Activated CD8-positive, alpha-beta T cell treated with anti-CD3 and anti-CD28 coated beads, Interleukin-2, amount 10 ng/mL, durations not matched to agents 7 days and 5 days (primary cell): ENCODE measurements at regions of chr12 and their contacts with region 1.

Region 1: GRCh38 chr12:12696562-12697383 is 790 bp upstream of the GPR19 start:
- DNase-seq: peak; percentile 94
- ATAC-seq: peak; percentile 86
- H3K4me3 Mint-ChIP-seq: peak overlapping the region; percentile 91
- H3K27ac Mint-ChIP-seq: peak overlapping the region; percentile 98
- H3K4me1 Mint-ChIP-seq: peaks cover 43% of the 10 kb centered on the region
- H3K27me3 Mint-ChIP-seq: no peaks in the 10 kb centered on the region

Region 2: DNA sequence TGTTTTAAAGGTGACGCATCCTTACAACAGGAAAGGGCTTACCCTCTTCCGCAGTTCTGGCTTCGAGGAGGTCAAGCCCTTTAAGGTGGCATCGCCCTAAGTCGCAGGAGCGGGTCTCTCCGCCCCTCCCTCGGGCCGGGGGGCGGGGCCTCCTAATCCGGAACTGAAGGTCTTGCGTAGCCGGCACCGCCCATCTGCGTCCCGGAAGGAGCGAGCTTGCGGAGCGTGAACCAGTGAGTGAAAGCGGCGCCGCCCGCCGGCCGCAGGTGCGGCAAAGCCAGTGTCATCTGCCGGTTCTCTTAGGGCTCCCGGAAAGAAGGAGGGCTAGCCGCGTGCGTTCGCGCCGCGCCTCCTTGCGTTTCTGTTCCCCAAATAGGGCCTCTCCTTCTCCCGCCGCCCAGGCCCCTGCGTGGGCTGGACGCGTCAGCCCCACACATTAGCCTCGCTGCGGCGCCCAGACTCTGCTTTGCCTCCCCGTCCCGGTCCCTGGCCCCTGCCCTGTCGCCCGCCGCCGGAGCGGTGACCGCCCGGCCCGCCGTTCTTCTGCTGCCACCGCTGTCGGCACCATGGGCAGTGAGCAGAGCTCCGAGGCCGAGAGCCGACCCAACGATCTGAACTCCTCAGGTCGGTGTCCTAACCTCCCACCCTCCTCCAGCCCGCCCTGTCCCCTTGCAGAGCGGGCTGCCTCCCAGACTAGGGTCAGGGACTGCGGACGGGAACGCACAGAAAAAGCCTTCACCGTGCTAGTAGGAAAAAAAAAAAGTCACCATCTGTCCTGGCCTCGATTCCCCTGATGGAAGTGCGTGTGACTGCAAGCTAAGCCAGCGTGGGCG is 339.7 kb before region 1 on chr12 and contains the start of gene BORCS5:
- CTCF ChIA-PET with region 1: no interaction called
- POLR2A ChIA-PET with region 1: interaction called, 19 read pairs
- DNase-seq: peak; percentile 99
- ATAC-seq: peak; percentile 94
- H3K4me3 Mint-ChIP-seq: peak within 1 kb of the TSS; percentile 88
- H3K27ac Mint-ChIP-seq: peak within 1 kb of the TSS; percentile 94
- H3K4me1 Mint-ChIP-seq: peaks cover 48% of the 10 kb centered on the region
- H3K27me3 Mint-ChIP-seq: no peaks in the 10 kb centered on the region
- total RNA-seq, gene BORCS5: 18.8 to 21.2 TPM

Region 3: DNA sequence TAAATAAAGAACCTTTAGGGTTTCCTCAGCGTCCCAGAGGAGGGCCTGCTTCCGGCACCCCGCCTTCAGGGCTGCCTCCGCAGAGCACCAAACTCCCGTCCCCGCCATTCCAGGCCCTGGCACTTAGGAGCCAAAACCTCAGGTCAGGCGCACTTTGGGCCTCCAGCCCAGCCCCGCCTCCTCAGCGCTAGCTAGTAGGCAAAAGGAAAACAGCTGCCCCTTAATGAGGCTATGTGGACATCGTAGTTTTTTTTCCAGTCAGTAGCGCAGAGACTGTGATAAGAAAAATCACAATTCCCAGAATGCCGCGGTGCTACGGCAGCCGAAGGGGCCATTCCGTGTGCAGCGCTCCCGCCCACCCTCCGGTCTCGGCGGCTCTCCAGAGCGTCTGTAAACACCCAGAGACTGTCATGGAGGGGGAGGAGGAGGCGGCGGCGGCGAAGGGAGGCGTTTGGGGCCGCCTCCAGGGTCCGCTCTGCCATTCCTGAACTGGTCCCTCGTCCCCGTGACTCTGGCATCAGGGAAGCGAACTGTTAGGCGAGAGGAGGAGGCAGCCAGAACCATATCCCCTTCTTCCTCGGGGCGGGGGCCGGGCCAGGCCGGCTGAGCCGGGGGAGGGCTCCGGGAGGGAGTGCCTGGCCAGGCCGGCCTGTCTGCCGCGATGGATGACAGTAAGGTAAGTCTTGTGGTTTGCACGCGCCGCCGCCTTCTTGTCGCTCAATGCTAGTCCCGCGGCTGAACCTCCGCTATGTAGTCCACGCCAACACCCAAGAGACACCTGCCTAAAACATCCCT is 85.1 kb before region 1 on chr12 and contains the start of gene CREBL2:
- CTCF ChIA-PET with region 1: no interaction called
- POLR2A ChIA-PET with region 1: interaction called, 12 read pairs
- DNase-seq: peak; percentile 89
- ATAC-seq: peak; percentile 91
- H3K4me3 Mint-ChIP-seq: peak within 1 kb of the TSS; percentile 85
- H3K27ac Mint-ChIP-seq: peak within 1 kb of the TSS; percentile 94
- H3K4me1 Mint-ChIP-seq: peaks cover 40% of the 10 kb centered on the region
- H3K27me3 Mint-ChIP-seq: no peaks in the 10 kb centered on the region
- total RNA-seq, gene CREBL2: 13.2 to 14.3 TPM